ENCODE measurements at regions of chr17 and their contacts with region 1.

Region 1: GRCh38 chr17:29133146-29133713 is 47.0 kb downstream of the MYO18A start:
- DNase-seq: no peak
- ATAC-seq: peak; percentile 92
- H3K4me3 ChIP-seq: peak overlapping the region; percentile 24 to 47
- H3K27ac ChIP-seq: peak overlapping the region; percentile 56
- H3K4me1 ChIP-seq: peaks cover 31 to 62% of the 10 kb centered on the region in 2 experiments
- H3K27me3 ChIP-seq: no peaks in the 10 kb centered on the region
- CTCF ChIP-seq: no peak
- POLR2A ChIP-seq: no peak
- RAD21 ChIP-seq: no peak

Region 2: DNA sequence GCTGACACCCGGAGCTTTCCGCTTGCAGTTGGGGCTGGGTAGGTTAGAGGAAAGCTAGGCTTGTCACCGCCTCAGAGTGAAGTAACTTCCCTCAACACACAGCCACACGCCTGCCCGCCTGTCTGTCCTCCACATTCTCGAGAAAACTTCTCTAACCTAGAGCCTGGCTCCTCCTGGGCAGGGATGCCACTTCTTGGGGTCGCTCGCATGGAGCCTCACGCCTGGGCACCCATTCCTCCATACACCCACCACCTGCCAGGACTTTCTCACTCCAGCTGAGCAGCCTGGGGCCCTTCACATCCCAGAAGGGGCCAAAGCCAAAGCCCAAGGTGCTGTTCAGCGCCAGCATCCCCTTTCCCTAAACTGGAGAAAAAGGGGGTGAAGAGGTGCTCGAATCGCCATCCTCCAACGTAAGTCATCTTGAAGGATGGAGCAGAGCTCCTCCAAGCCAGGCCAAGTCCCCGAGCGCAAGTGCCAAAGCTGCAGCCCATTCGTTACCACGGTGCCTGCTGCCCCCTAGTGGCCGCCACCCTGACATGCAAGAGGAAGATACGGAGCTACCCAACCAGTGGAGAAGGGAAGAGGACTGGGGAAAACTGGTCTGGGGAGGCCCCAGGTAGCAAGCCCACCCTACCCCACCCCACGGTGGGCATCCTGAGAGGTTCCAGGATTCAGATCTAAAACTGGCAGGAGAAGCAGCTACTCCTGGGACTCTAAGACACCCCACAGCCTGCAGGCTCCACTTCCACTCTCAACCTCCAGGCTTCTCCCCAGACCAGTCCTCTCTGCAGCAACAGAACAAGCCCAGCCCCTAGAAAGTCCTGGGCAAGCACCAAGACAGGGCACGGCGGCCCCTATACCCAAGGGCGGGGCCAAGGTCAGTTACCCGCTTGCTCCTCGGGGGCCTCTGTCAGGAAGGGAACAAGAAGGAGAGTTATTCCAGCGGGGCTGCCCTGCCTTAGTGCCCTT is 16.1 kb before region 1 on chr17:
- CTCF ChIA-PET with region 1: interaction called, 46 read pairs
- POLR2A ChIA-PET with region 1: no interaction called
- RAD21 ChIA-PET with region 1: interaction called in 1 of 2 experiments, 3 read pairs
- intact Hi-C with region 1: no loop called
- DNase-seq: no peak
- ATAC-seq: peak; percentile 77
- H3K4me3 ChIP-seq: no peak overlapping the region
- H3K27ac ChIP-seq: no peak overlapping the region
- H3K4me1 ChIP-seq: 0 out of 4 replicates have a peak, but pooled peaks cover 0 to 3% of the 10 kb centered on the region in 2 experiments
- H3K27me3 ChIP-seq: no peaks in the 10 kb centered on the region
- CTCF ChIP-seq: peak; percentile 65 to 94 (median 90); a peak in 5 of 6 replicates
- POLR2A ChIP-seq: no peak
- RAD21 ChIP-seq: peak; percentile 77

Region 3: GRCh38 chr17:29210879-29211278 is 77.6 kb after region 1 on chr17:
- CTCF ChIA-PET with region 1: no interaction called
- POLR2A ChIA-PET with region 1: no interaction called
- RAD21 ChIA-PET with region 1: no interaction called
- intact Hi-C with region 1: no loop called
- DNase-seq: no peak
- ATAC-seq: no peak
- H3K4me3 ChIP-seq: no peak overlapping the region
- H3K27ac ChIP-seq: no peak overlapping the region
- H3K4me1 ChIP-seq: no peaks in the 10 kb centered on the region
- H3K27me3 ChIP-seq: no peaks in the 10 kb centered on the region
- CTCF ChIP-seq: no peak
- POLR2A ChIP-seq: no peak
- RAD21 ChIP-seq: no peak

Measured in HCT116 (cell line).